ENCODE measurements at regions of chr1 and their contacts with region 1.

Region 1: DNA sequence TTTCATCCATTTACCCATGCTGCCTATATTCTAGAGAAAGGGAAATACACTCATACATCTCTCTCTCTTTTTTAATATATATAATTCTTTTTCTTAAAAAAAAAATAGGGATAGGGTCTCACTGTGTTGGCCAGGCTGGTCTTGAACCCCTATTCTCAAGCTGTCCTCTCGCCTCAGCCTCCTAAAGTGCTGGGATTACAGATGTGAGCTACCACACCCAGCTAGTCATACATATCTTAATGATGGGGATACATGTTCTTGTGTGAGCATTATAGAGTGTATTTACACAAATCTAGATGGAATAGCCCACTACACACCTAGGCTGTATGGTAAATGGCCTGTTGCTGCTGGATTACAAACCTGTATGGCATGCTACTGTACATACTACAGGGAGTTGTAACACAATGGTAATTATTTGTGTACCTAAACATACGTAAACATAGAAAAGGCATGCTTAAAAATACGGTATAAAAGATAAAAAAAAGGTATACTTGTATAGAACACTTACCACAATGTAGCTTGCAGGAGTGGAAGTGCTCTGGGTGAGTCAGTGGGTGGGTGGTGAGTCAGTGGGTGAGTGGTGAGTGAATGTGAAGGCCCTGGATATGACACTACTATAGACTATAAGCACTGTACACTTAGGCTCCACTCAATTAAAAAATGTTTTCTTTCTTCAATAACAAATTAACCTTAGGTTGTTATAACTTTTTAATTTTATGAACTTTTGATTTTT is 72.9 kb downstream of the IVNS1ABP start:
- DNase-seq: no peak
- ATAC-seq: peak; percentile 72; the same call in 1 of the 2 replicates
- H3K4me3 ChIP-seq: no peak overlapping the region
- H3K27ac ChIP-seq: no peak overlapping the region
- H3K4me1 ChIP-seq: no peaks in the 10 kb centered on the region
- H3K27me3 ChIP-seq: no peaks in the 10 kb centered on the region
- CTCF ChIP-seq: no peak

Region 2: DNA sequence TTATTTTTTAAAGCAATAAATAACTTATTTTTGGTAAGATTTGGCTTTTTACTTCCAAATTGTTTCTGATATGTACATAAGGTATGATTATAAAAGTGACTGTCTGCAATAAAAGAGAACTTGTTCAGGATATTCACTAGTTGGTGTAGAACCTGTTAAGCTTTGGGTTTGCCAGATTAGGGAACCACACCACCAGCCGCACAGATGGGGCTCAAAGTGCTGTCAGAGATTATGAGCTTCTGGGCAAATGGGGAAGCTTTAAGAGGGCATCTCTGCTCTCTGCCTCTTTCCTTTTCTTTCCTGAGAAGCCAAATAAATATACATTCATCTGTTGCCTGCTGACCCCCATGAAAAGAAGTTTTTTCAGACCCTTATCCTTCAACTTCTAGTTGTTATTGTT is 47.5 kb after region 1 on chr1:
- CTCF ChIA-PET with region 1: no interaction called
- POLR2A ChIA-PET with region 1: interaction called, 12 read pairs
- in situ Hi-C with region 1: no loop called
- intact Hi-C with region 1: no loop called
- DNase-seq: no peak
- ATAC-seq: no peak
- H3K4me3 ChIP-seq: no peak overlapping the region
- H3K27ac ChIP-seq: no peak overlapping the region
- H3K4me1 ChIP-seq: no peaks in the 10 kb centered on the region
- H3K27me3 ChIP-seq: no peaks in the 10 kb centered on the region
- CTCF ChIP-seq: no peak

Region 3: DNA sequence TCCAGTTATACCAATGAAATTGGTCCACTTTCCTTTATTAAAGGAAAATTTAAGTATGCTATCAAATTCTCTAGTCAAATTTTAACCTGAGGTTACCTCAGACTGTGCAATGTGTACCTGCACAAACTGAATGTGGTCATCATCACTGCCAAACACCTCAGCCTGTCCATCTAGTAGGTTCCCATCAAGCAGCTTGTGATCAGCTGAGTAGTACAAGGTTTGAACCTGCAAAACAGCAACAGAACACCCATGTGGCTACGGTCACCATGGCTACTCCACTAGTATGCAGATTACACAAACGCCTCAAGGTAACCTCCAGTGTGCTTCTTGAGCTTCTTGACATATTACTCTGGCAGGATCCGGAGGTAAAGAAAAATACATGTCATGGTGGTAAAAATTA is 61.2 kb after region 1 on chr1:
- CTCF ChIA-PET with region 1: no interaction called
- POLR2A ChIA-PET with region 1: interaction called, 10 read pairs
- in situ Hi-C with region 1: no loop called
- intact Hi-C with region 1: no loop called
- DNase-seq: no peak
- ATAC-seq: no peak
- H3K4me3 ChIP-seq: no peak overlapping the region
- H3K27ac ChIP-seq: no peak overlapping the region
- H3K4me1 ChIP-seq: no peaks in the 10 kb centered on the region
- H3K27me3 ChIP-seq: no peaks in the 10 kb centered on the region
- CTCF ChIP-seq: no peak